Heart left ventricle (tissue), 16 donors: ENCODE measurements at regions of chr1 and their contacts with region 1.

Region 1: GRCh38 chr1:70436622-70437251 is 25.7 kb downstream of the CTH start:
- DNase-seq: no peak
- ATAC-seq: peak in 2 of 4 donors; percentile 36 to 45
- H3K4me3 ChIP-seq: no peak overlapping the region
- H3K27ac ChIP-seq: no peak overlapping the region
- H3K4me1 ChIP-seq: peaks cover 0 to 13% (median 4%) of the 10 kb centered on the region in 12 donors
- H3K27me3 ChIP-seq: no peaks in the 10 kb centered on the region
- CTCF ChIP-seq: peak in 10 of 12 donors; percentile 27 to 64 (median 43)
- POLR2A ChIP-seq: no peak

Region 2: GRCh38 chr1:70487910-70488665 is 51.4 kb after region 1 on chr1:
- intact Hi-C with region 1: loop called in 6 of 10 experiments (anchors 2 to 5 kb)
- DNase-seq: no peak
- ATAC-seq: peak in 3 of 4 donors; percentile 44 to 62 (median 50)
- H3K4me3 ChIP-seq: no peak overlapping the region
- H3K27ac ChIP-seq: no peak overlapping the region
- H3K4me1 ChIP-seq: peaks cover 0 to 13% (median 3%) of the 10 kb centered on the region in 12 donors
- H3K27me3 ChIP-seq: no peaks in the 10 kb centered on the region
- CTCF ChIP-seq: peak; percentile 22 to 70 (median 56)
- POLR2A ChIP-seq: no peak

Region 3: DNA sequence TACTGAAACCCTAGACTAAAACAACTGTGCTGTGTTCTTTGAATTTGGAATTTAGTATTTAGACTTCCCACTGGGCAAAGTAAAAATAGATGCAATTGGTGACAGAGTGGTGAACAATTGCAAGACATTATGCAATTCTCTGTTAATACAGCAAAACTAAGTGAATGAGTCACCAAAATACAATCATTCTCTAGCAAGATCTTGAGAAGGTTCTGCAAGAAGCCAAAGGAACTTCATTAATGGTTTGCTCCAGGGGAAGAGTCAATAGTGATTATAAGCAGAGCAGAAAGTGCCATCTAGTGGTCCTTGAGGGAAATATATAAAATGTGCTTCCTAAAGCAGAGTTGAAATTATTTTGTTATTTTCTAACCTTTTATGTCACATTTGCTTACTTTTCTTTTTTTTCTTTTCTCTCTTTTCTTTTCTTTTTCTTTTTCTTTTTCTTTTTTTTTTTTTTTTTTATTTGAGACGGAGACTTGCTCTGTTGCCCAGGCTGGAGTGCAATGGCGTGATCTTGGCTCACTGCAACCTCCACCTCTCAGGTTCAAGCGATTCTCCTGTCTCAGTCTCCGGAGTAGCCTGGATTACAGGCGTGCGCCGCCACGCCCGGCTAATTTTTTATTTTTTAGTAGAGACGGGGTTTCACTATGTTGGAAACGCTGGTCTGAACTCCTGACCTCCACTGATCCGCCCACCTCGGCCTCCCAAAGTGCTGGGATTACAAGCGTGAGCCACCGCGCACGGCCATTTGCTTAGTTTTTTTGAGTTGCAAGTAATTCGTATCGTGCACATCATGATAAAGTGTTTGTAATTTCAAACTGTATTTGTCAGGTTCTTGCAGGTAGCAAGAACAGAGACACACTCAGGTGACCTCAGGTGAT is 73.5 kb after region 1 on chr1:
- intact Hi-C with region 1: loop called in 7 of 10 experiments (anchors 2 to 5 kb)
- DNase-seq: no peak
- ATAC-seq: peak; percentile 58 to 87 (median 64)
- H3K4me3 ChIP-seq: no peak overlapping the region
- H3K27ac ChIP-seq: no peak overlapping the region
- H3K4me1 ChIP-seq: no peaks in the 10 kb centered on the region
- H3K27me3 ChIP-seq: peaks cover 0 to 3% (median 0%) of the 10 kb centered on the region in 9 donors
- CTCF ChIP-seq: peak; percentile 46 to 76 (median 66)
- POLR2A ChIP-seq: no peak

Region 4: GRCh38 chr1:70583522-70583921 is 146.8 kb after region 1 on chr1:
- intact Hi-C with region 1: no loop called
- DNase-seq: no peak
- ATAC-seq: no peak
- H3K4me3 ChIP-seq: no peak overlapping the region
- H3K27ac ChIP-seq: no peak overlapping the region
- H3K4me1 ChIP-seq: no peaks in the 10 kb centered on the region
- H3K27me3 ChIP-seq: no peaks in the 10 kb centered on the region
- CTCF ChIP-seq: no peak
- POLR2A ChIP-seq: no peak

Region 5: GRCh38 chr1:71049951-71050598 is 613.3 kb after region 1 on chr1:
- intact Hi-C with region 1: loop called in 1 of 10 experiments (anchors 10 kb)
- DNase-seq: no peak
- ATAC-seq: peak in 3 of 4 donors; percentile 56 to 68 (median 61)
- H3K4me3 ChIP-seq: no peak overlapping the region
- H3K27ac ChIP-seq: no peak overlapping the region
- H3K4me1 ChIP-seq: peaks cover 0 to 20% (median 8%) of the 10 kb centered on the region in 12 donors
- H3K27me3 ChIP-seq: peaks cover 6 to 49% (median 26%) of the 10 kb centered on the region in 9 donors
- CTCF ChIP-seq: peak; percentile 62 to 86 (median 72)
- POLR2A ChIP-seq: no peak